ENCODE measurements at regions of chr18 and their contacts with region 1.

Region 1: DNA sequence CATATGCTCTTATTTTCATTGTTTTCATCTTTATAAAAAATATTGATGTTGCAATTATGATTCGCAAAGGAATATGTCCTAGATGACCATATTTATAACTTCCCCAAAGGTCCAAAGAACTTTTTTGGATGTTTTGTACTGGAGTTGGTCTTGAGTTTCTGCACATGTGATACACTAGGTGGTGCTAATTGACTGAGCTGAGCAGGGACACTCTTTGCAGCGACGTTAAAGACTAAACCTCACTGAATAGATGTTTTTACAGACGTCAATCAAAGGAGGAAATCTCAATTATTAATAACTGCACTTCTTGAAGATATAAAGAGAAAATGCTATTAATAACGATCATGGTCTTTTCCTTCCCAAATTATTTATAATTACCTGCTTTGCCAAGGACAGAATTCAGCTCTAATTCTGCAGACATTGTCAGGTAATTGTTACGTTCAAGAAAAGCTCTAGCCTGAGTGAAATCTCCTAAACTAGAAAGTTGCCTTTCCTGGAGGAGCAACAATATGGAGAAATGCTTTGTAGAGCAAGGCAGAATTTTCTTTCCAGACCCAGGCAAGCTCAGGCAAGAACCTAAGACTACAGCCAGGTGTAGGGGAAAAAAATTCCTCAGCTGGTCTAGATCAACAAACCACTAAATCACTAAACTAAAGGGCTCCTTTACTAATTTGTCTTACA is 119.3 kb upstream of the RBBP8 start:
- DNase-seq: no peak
- H3K4me3 ChIP-seq: no peak overlapping the region
- H3K27me3 ChIP-seq: peaks cover 4% of the 10 kb centered on the region; the same call in 1 of the 2 replicates
- CTCF ChIP-seq: peak; percentile 53

Region 2: GRCh38 chr18:22831441-22831904 is 17.7 kb after region 1 on chr18:
- CTCF ChIA-PET with region 1: no interaction called
- POLR2A ChIA-PET with region 1: no interaction called
- DNase-seq: no peak
- H3K4me3 ChIP-seq: no peak overlapping the region
- H3K27me3 ChIP-seq: no peaks in the 10 kb centered on the region
- CTCF ChIP-seq: no peak

Region 3: DNA sequence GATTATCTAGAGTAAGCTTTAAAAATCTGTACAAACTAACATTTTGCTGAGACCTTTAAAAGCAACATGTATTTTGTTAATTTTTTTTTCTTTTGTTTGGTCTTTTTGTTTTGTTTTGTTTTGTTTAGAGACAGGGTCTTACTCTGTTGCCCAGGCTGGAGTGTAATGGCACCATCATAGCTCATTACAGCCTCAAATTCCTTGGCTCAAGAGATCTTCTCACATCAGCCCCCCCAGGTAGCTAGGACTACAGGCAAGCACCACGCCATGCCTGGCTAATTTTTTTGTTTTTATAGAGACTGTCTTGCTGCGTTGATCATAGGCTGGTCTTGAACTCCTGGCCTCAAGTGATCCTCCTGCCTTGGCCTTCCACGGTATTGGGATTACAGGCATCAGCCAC is 142.4 kb after region 1 on chr18:
- CTCF ChIA-PET with region 1: interaction called, 12 read pairs
- POLR2A ChIA-PET with region 1: no interaction called
- DNase-seq: no peak
- H3K4me3 ChIP-seq: no peak overlapping the region
- H3K27me3 ChIP-seq: no peaks in the 10 kb centered on the region
- CTCF ChIP-seq: no peak

Region 4: DNA sequence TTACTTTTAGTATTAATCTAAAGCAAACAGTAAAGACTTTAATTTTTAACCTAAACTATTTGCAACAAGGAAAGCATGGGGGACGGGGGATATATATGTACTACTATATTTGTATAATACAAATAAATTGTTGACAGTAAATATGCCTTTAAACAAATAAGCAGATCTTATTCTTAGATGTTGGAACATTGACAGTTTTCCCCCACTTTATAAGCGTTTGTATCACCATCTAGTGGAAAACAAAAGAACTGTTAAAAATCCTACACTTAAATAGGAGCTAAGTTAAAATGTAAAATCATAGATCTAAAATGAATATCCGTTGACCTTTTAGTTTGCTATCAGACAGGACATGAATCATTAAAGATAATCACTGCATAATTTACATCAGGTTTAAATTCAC is 169.4 kb after region 1 on chr18:
- CTCF ChIA-PET with region 1: interaction called, 24 read pairs
- POLR2A ChIA-PET with region 1: no interaction called
- DNase-seq: no peak
- H3K4me3 ChIP-seq: no peak overlapping the region
- H3K27me3 ChIP-seq: no peaks in the 10 kb centered on the region
- CTCF ChIP-seq: peak; percentile 46